Activated CD4-positive, alpha-beta T cell treated with anti-CD3 and anti-CD28 coated beads, Interleukin-2, amount 10 ng/mL, durations not matched to agents 24 days and 14 days (primary cell): ENCODE measurements at regions of chr12 and their contacts with region 1.

Region 1: GRCh38 chr12:3073438-3074250 is 3.5 kb upstream of the TSPAN9 start:
- DNase-seq: peak; percentile 95
- H3K4me3 Mint-ChIP-seq: no peak overlapping the region
- H3K27ac Mint-ChIP-seq: no peak overlapping the region
- H3K4me1 Mint-ChIP-seq: peaks cover 11% of the 10 kb centered on the region
- H3K27me3 Mint-ChIP-seq: peaks cover 29% of the 10 kb centered on the region

Region 2: GRCh38 chr12:3202734-3203446 is 129.2 kb after region 1 on chr12:
- intact Hi-C with region 1: loop called (anchors 2 kb)
- DNase-seq: peak; percentile 85
- H3K4me3 Mint-ChIP-seq: no peak overlapping the region
- H3K27ac Mint-ChIP-seq: no peak overlapping the region
- H3K4me1 Mint-ChIP-seq: no peaks in the 10 kb centered on the region
- H3K27me3 Mint-ChIP-seq: peaks cover 39% of the 10 kb centered on the region

Region 3: DNA sequence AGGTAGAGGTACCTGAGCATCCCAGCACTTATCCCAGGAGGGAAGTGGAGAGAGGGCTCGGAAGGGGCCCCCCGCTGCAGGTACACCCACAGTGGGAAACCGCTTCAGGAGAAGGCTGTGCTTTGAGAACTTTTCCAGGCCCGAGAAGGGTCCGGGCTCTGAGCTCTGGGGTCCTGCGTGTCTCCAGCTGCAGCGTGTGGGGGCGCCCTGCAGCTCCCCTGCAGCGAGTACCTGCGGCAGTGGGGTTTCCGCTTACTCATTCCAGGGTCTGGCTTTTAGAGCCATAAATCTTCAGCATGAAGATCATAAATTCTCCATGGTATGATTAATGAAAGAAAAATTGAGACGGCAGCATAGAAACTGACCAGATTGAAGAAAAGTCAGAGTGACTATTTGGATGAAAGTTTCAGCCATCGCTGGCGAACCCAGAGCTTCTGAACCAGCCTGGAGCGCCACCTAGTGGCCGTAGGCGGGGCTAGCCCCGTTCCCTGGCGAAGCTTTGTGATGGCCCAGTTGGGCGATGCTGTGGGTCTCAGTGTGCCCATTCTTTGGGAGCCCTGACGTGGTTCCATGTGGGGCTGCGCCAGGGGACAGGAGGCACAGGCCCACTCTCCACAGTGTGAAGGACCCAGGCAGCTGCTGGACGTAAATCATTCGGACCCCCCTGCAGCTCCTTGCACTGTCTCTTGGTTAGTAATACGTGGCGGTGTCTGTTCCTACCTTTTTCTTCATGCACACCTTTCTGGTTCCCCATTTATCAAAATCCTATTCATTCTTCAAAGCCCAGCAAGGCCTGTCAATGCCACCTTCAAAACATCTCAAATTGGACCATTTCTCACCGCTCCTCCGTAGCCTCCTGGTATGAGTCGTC is 201.8 kb after region 1 on chr12:
- intact Hi-C with region 1: loop called (anchors 1 kb)
- DNase-seq: peak; percentile 92
- H3K4me3 Mint-ChIP-seq: no peak overlapping the region
- H3K27ac Mint-ChIP-seq: no peak overlapping the region
- H3K4me1 Mint-ChIP-seq: no peaks in the 10 kb centered on the region
- H3K27me3 Mint-ChIP-seq: peaks cover 5% of the 10 kb centered on the region